ENCODE measurements at regions of chr1 and their contacts with region 1.

Region 1: DNA sequence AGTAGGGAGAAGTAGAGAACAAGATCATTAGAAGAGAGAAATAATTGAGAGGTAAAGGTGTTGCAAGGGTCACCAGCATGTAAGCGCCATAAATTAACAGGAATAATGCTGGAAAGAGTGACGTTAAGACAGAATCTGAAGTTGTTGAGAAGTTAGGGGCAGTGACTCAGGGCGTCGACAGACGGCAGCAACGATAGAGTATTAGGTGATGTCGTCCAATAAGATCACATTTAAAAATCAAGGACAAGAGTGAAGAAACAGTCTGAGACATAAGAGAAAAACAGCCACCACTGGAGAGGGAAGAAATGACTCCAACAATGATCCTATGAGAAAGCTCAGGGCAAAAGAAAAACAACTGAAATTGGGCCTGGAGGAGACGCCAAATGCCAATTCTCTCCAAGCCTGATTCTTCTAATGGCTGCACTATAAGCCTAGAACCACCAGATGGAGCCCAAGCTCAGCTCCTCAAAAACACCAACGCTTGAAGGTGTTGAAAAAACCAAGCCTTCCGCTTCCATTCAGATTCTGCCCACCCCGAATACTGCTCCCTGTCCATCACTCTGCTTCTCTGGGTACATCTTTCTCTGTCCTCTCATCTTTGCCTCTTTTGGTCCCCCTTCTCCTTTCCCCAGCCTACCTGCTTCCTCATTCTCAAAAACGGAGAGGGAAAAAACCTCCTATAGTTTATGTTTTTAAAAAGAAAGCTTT is 70.0 kb downstream of the LUZP1 start:
- DNase-seq: peak; percentile 24 to 79 (median 64)
- ATAC-seq: peak; percentile 52 to 69
- H3K4me3 Mint-ChIP-seq: peak overlapping the region in 3 of 10 donors; percentile 36 to 53 (median 52)
- H3K27ac Mint-ChIP-seq: peak overlapping the region in 3 of 10 donors; percentile 11 to 46 (median 22)
- H3K4me1 Mint-ChIP-seq: peaks cover 21 to 52% (median 33%) of the 10 kb centered on the region in 4 donors
- H3K27me3 Mint-ChIP-seq: no peaks in the 10 kb centered on the region

Region 2: GRCh38 chr1:23114424-23115079 is 15.9 kb after region 1 on chr1:
- POLR2A ChIA-PET with region 1: no interaction called
- DNase-seq: no peak
- ATAC-seq: peak; percentile 64 to 66
- H3K4me3 Mint-ChIP-seq: peak overlapping the region in 1 of 10 donors; percentile 34
- H3K27ac Mint-ChIP-seq: peak overlapping the region in 5 of 10 donors; percentile 4 to 77 (median 53)
- H3K4me1 Mint-ChIP-seq: peaks cover 37 to 86% (median 55%) of the 10 kb centered on the region in 4 donors
- H3K27me3 Mint-ChIP-seq: no peaks in the 10 kb centered on the region

Region 3: DNA sequence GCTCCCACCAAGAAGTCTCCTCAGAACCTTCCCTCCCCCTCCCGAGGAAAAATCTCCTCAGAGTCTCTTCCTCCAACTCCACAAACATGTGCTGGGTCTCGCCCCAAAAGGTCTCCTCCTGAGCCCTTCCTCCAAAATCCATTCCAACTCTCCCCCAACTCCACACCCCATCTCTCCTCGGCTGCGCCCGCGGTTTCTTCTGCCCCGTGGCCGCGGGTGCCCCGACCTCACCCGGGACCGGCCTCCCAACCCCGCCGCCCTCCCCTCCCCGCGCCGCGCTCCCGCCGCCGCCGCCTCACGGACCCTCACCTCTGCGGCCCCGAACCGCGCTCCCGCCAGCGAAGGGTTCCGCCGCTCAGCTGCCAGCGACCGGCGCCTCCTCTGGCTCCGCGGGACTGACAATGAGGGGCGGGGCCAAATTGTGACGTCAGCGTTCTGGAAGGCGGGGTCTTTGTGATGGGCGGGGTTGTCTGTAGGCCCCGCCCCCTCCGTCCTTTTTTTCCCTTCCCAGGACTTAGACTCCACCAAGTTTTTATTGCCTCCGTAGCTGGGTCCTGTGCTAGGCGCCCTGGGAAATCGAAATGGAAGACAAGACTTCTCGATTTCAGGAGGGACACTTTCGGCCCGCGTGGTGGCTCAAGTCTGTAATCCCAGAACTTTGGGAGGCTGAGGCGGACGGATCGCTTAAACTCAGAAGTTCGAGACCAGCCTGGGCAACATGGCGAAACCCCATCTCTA is 70.0 kb after region 1 on chr1 and contains the start of gene LUZP1:
- POLR2A ChIA-PET with region 1: interaction called, 10 read pairs
- DNase-seq: peak; percentile 74 to 94 (median 84)
- ATAC-seq: peak; percentile 80 to 82
- H3K4me3 Mint-ChIP-seq: peak within 1 kb of the TSS; percentile 91 to 97 (median 96)
- H3K27ac Mint-ChIP-seq: peak within 1 kb of the TSS; percentile 69 to 96 (median 91)
- H3K4me1 Mint-ChIP-seq: peaks cover 12 to 44% (median 37%) of the 10 kb centered on the region in 4 donors
- H3K27me3 Mint-ChIP-seq: no peaks in the 10 kb centered on the region
- polyA plus RNA-seq, gene LUZP1: 8.1 to 12.2 (median 10.2) TPM

Region 4: GRCh38 chr1:23184212-23184934 is 85.8 kb after region 1 on chr1:
- POLR2A ChIA-PET with region 1: interaction called, 24 read pairs
- DNase-seq: peak; percentile 10 to 73 (median 48)
- ATAC-seq: peak; percentile 39 to 50
- H3K4me3 Mint-ChIP-seq: peak overlapping the region; percentile 60 to 82 (median 72)
- H3K27ac Mint-ChIP-seq: peak overlapping the region in 5 of 10 donors; percentile 14 to 80 (median 43)
- H3K4me1 Mint-ChIP-seq: peaks cover 3 to 10% (median 4%) of the 10 kb centered on the region in 4 donors
- H3K27me3 Mint-ChIP-seq: peaks cover 0 to 10% (median 0%) of the 10 kb centered on the region in 5 donors